ENCODE measurements at regions of chr1 and their contacts with region 1.

Region 1: DNA sequence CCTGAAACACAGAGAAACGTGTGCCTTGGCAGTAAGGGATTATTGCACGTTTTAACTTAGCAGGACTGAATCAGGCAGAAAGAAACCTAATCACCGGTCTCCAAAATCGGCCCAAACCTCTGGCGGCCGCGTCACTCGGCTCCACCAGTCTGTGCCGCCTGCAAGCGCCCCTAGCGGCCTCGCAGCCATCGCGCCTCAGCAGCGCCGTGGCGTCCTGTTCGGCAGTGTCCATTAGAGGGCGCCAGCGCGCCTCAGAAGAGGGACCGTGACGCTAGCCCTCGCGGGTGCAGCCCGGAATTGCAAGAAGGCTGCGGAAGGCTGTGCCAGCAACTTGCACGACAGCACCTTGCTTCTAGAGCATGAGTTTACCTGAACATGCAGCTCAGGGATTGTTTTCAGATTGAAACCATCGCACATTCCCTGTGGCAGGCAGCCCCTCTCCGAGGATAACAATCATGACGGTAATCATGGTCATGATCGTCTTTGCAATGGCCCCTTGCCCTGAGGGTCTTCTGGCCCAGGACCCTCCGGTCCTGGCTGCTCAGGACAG is 164.4 kb downstream of the TRIM33 start:
- DNase-seq: peak; percentile 95
- ATAC-seq: peak; percentile 100
- H3K4me3 Mint-ChIP-seq: peak overlapping the region; percentile 94
- H3K27ac Mint-ChIP-seq: peak overlapping the region; percentile 56
- H3K4me1 Mint-ChIP-seq: peaks cover 7% of the 10 kb centered on the region
- H3K27me3 Mint-ChIP-seq: peaks cover 7% of the 10 kb centered on the region
- CTCF ChIP-seq: peak; percentile 100

Region 2: DNA sequence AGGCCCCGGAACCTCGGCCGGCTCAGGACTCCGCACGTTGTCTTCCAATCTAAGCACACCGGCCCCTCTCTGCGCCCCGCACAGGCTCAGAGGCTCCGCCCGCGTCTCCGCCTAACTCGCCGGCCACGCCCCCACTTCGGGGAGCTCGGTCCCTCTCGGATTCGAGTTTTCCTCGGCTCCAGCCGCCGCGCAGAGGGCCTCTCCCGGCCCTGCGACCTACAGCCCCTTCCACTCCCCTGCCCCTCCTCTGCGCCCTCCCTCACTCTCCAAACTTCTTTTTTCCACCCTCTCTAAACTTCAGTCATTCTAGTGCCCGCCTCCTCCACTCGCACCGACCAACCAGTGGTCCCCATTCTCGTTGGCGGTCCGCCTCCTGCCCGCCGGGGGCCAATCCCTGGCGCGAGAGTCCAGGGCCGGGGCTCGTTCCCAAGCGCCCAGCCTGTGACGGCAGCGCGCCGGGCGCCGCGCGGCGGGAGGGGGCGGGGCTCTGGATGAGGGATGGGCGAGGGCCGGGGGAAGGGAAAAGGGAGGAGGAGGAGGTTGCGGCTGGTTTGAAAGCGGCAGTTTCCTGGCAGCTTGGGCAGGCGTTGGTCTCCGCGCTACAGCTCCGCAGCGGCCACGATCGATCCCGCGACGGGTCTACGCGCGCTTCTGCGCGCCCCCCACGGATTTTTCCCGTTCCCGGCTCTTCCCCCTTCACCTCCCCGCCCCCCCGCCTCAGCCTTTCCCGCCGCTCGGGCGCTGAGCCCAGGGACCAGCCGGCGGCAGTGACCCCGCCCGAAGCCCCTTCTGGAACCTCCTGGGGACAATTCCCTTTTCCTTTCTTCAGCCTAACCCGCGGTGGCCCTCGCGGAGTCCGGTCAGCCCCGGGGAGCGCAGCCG is 956.4 kb before region 1 on chr1 and contains the start of gene MAGI3:
- CTCF ChIA-PET with region 1: no interaction called
- POLR2A ChIA-PET with region 1: no interaction called
- intact Hi-C with region 1: loop called (anchors 5 kb)
- DNase-seq: peak; percentile 83
- ATAC-seq: peak; percentile 98
- H3K4me3 Mint-ChIP-seq: peak within 1 kb of the TSS; percentile 95
- H3K27ac Mint-ChIP-seq: peak within 1 kb of the TSS; percentile 77
- H3K4me1 Mint-ChIP-seq: peaks cover 18% of the 10 kb centered on the region
- H3K27me3 Mint-ChIP-seq: peaks cover 29% of the 10 kb centered on the region
- CTCF ChIP-seq: no peak
- total RNA-seq, gene MAGI3: 0.83 and 1.0 TPM in 2 replicates

Region 3: GRCh38 chr1:114558544-114558943 is 212.0 kb after region 1 on chr1:
- CTCF ChIA-PET with region 1: interaction called, 11 read pairs
- POLR2A ChIA-PET with region 1: no interaction called
- intact Hi-C with region 1: loop called (anchors 1 kb)
- DNase-seq: no peak
- ATAC-seq: peak; percentile 59
- H3K4me3 Mint-ChIP-seq: no peak overlapping the region
- H3K27ac Mint-ChIP-seq: peak overlapping the region; percentile 62
- H3K4me1 Mint-ChIP-seq: peaks cover 34% of the 10 kb centered on the region
- H3K27me3 Mint-ChIP-seq: no peaks in the 10 kb centered on the region
- CTCF ChIP-seq: no peak

Region 4: GRCh38 chr1:114716304-114717170 is 370.0 kb after region 1 on chr1 and contains the start of gene NRAS:
- CTCF ChIA-PET with region 1: interaction called, 3 read pairs
- POLR2A ChIA-PET with region 1: no interaction called
- intact Hi-C with region 1: loop called (anchors 1 kb)
- DNase-seq: peak; percentile 97
- ATAC-seq: peak; percentile 94
- H3K4me3 Mint-ChIP-seq: peak within 1 kb of the TSS; percentile 99
- H3K27ac Mint-ChIP-seq: peak within 1 kb of the TSS; percentile 98
- H3K4me1 Mint-ChIP-seq: peaks cover 28% of the 10 kb centered on the region
- H3K27me3 Mint-ChIP-seq: no peaks in the 10 kb centered on the region
- CTCF ChIP-seq: no peak
- total RNA-seq, gene NRAS: 53.3 and 55.5 TPM in 2 replicates

Region 5: GRCh38 chr1:115112496-115113375 is 766.2 kb after region 1 on chr1:
- CTCF ChIA-PET with region 1: interaction called, 3 read pairs
- POLR2A ChIA-PET with region 1: no interaction called
- intact Hi-C with region 1: loop called (anchors 1 kb)
- DNase-seq: peak; percentile 45
- ATAC-seq: peak; percentile 40
- H3K4me3 Mint-ChIP-seq: no peak overlapping the region
- H3K27ac Mint-ChIP-seq: no peak overlapping the region
- H3K4me1 Mint-ChIP-seq: no peaks in the 10 kb centered on the region
- H3K27me3 Mint-ChIP-seq: no peaks in the 10 kb centered on the region
- CTCF ChIP-seq: peak; percentile 75

Measured in activated B cell treated with CpG ODN at 0.5 μM for 24 hours (primary cell).